ENCODE measurements at regions of chr2 and their contacts with region 1.

Region 1: GRCh38 chr2:102235491-102235890 is 48.7 kb downstream of the IL1RL2 start:
- DNase-seq: no peak
- ATAC-seq: peak in 1 of 2 donors; percentile 29
- H3K4me3 ChIP-seq: no peak overlapping the region
- H3K27ac ChIP-seq: no peak overlapping the region
- H3K4me1 ChIP-seq: peaks cover 0 to 12% of the 10 kb centered on the region in 2 donors
- H3K27me3 ChIP-seq: no peaks in the 10 kb centered on the region
- CTCF ChIP-seq: peak in 1 of 5 experiments; percentile 29
- POLR2A ChIP-seq: no peak

Region 2: DNA sequence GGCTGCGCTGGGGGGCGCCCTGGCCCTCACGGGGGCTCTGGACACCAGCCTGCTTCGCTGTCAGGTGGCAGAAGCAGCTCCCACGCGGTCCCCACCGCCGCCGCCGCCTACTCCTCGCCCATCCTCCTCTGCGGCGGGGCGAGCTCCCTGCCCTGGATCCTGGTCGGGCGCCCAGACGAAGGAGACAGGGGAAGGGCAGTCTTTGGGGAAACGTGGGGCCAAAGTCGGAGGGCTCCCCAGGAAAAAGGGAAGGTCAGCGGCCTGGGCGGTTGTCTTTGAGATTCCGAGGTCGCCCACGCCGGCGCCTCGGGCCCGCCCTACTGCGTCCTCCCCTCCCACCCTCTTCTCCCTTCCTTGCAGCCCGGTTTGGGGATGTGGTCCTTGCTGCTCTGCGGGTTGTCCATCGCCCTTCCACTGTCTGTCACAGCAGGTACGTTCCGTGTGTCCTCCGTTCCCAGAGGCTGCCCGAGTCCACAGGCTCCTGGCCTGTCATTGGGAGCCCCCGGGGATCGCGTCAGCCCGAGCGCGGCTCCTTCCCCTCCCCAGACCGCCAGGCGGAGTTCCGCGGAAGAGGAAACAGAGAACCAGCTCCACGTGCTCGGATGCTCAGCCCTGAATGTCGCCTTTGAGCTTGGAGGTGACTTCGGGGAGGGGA is 47.9 kb before region 1 on chr2:
- in situ Hi-C with region 1: loop called in 1 of 4 experiments (anchors 10 kb)
- intact Hi-C with region 1: no loop called
- DNase-seq: peak; percentile 31 to 41
- ATAC-seq: peak; percentile 72 to 75
- H3K4me3 ChIP-seq: peak overlapping the region; percentile 56 to 66 (median 61)
- H3K27ac ChIP-seq: peak overlapping the region; percentile 50 to 74 (median 60)
- H3K4me1 ChIP-seq: no peaks in the 10 kb centered on the region
- H3K27me3 ChIP-seq: no peaks in the 10 kb centered on the region
- CTCF ChIP-seq: peak in 4 of 5 experiments; percentile 27 to 54 (median 50)
- POLR2A ChIP-seq: peak in 1 of 2 donors; percentile 28

Measured in gastrocnemius medialis (tissue), 4 donors.